Calu3 (cell line): ENCODE measurements at regions of chr6 and their contacts with region 1.

Region 1: GRCh38 chr6:160137989-160138835 is 16.6 kb downstream of the SLC22A1 start:
- DNase-seq: peak; percentile 64
- H3K4me3 Mint-ChIP-seq: no peak overlapping the region
- H3K27ac Mint-ChIP-seq: no peak overlapping the region
- H3K4me1 Mint-ChIP-seq: peaks cover 24% of the 10 kb centered on the region
- H3K27me3 Mint-ChIP-seq: no peaks in the 10 kb centered on the region
- CTCF ChIP-seq: peak; percentile 63

Region 2: GRCh38 chr6:159941286-159942113 is 196.7 kb before region 1 on chr6:
- CTCF ChIA-PET with region 1: no interaction called
- intact Hi-C with region 1: no loop called
- DNase-seq: peak; percentile 24
- H3K4me3 Mint-ChIP-seq: no peak overlapping the region
- H3K27ac Mint-ChIP-seq: no peak overlapping the region
- H3K4me1 Mint-ChIP-seq: no peaks in the 10 kb centered on the region
- H3K27me3 Mint-ChIP-seq: peaks cover 24% of the 10 kb centered on the region
- CTCF ChIP-seq: no peak

Region 3: DNA sequence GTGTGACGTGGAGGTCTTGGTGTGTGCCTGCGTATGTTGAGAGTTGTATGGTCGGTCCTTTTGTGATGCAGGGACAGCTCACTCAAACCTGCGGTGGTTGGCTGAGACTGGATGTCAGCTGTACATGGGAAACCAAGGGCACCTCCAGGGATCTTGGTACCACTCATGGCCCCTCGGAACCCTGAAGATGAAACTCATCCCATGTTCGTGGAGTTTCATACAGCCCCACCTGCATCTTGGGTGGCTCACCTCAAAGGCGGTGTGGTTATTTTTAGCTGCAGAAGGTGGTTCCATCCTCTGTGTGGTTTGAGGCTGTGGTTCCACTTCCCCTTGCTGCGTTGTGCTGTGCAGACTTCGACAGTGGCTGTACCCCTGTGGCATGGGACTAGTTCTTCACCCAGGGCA is 69.2 kb before region 1 on chr6:
- CTCF ChIA-PET with region 1: no interaction called
- intact Hi-C with region 1: no loop called
- DNase-seq: no peak
- H3K4me3 Mint-ChIP-seq: no peak overlapping the region
- H3K27ac Mint-ChIP-seq: no peak overlapping the region
- H3K4me1 Mint-ChIP-seq: no peaks in the 10 kb centered on the region
- H3K27me3 Mint-ChIP-seq: no peaks in the 10 kb centered on the region
- CTCF ChIP-seq: no peak

Region 4: DNA sequence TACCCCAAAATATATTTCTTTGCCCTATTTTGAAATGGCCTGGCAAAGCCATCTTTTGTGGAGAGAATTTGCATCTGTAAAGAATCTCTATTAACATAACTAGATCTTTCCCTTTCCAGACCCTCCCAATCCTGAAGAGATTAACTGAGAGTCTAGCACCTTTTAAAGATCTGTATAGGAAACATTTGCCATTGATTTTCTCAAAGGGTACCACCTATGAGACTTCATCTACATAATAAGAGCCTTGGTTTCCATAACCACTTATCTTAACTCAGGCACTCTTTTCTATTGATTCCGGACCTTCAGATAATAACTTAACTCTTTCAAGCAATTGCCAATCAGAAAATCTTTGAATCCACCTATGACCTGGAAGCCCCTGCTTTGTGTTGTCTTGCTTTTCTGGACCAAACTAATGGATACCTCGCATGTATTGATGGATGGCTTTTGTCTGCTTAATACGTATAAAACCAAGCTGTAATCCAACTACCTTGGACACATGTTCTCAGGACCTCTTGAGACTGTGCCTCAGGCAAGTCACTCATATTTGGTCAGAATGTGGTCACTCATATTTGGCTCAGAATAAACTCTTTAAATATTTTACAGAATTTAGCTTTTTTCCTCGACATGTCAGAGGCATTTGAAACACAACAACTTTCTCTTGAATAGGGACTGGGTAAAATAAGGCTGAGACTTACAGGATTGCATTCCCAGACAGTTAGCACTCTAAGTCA is 89.0 kb after region 1 on chr6:
- CTCF ChIA-PET with region 1: no interaction called
- intact Hi-C with region 1: no loop called
- DNase-seq: no peak
- H3K4me3 Mint-ChIP-seq: no peak overlapping the region
- H3K27ac Mint-ChIP-seq: no peak overlapping the region
- H3K4me1 Mint-ChIP-seq: no peaks in the 10 kb centered on the region
- H3K27me3 Mint-ChIP-seq: no peaks in the 10 kb centered on the region
- CTCF ChIP-seq: no peak

Region 5: GRCh38 chr6:160297310-160297709 is 159.1 kb after region 1 on chr6:
- CTCF ChIA-PET with region 1: interaction called, 13 read pairs
- intact Hi-C with region 1: loop called (anchors 1 kb)
- DNase-seq: peak; percentile 59
- H3K4me3 Mint-ChIP-seq: no peak overlapping the region
- H3K27ac Mint-ChIP-seq: no peak overlapping the region
- H3K4me1 Mint-ChIP-seq: peaks cover 44% of the 10 kb centered on the region
- H3K27me3 Mint-ChIP-seq: no peaks in the 10 kb centered on the region
- CTCF ChIP-seq: peak; percentile 51

Region 6: DNA sequence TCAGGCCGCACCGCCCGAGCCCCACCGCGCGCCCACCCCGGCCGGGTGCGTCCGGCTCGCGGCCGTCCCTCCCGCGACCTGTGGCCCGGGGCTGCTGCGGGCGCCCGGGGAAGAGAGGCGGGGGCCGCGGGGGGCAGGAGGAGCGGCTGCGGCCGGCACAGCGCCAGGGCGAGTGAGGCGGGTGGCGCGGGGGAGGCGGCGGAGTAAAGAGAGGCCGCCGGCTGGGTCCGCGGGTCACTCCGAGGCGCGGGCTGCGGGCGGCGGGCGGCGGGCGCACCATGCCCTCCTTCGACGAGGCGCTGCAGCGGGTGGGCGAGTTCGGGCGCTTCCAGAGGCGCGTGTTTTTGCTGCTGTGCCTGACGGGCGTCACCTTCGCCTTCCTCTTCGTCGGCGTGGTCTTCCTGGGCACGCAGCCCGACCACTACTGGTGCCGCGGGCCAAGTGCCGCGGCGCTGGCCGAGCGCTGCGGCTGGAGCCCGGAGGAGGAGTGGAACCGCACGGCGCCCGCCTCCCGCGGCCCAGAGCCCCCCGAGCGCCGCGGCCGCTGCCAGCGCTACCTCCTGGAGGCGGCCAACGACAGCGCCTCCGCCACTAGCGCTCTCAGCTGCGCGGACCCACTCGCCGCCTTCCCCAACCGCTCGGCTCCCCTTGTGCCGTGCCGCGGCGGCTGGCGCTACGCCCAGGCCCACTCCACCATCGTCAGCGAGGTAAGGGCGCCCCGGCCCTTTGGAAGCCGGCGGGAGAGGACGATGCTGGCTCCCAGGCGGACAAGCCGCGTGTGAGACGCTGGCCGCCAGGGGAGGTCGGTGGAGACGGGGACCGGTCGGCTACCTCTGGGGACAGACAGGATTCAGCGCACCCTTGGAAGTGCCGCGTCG is 210.2 kb after region 1 on chr6 and contains the start of gene SLC22A3:
- CTCF ChIA-PET with region 1: no interaction called
- intact Hi-C with region 1: loop called (anchors 2 kb)
- DNase-seq: peak; percentile 58
- H3K4me3 Mint-ChIP-seq: peak within 1 kb of the TSS; percentile 83
- H3K27ac Mint-ChIP-seq: peak within 1 kb of the TSS; percentile 73
- H3K4me1 Mint-ChIP-seq: peaks cover 16% of the 10 kb centered on the region
- H3K27me3 Mint-ChIP-seq: no peaks in the 10 kb centered on the region
- CTCF ChIP-seq: no peak
- total RNA-seq, gene SLC22A3: 3.3 and 8.1 TPM in 2 replicates

Region 7: DNA sequence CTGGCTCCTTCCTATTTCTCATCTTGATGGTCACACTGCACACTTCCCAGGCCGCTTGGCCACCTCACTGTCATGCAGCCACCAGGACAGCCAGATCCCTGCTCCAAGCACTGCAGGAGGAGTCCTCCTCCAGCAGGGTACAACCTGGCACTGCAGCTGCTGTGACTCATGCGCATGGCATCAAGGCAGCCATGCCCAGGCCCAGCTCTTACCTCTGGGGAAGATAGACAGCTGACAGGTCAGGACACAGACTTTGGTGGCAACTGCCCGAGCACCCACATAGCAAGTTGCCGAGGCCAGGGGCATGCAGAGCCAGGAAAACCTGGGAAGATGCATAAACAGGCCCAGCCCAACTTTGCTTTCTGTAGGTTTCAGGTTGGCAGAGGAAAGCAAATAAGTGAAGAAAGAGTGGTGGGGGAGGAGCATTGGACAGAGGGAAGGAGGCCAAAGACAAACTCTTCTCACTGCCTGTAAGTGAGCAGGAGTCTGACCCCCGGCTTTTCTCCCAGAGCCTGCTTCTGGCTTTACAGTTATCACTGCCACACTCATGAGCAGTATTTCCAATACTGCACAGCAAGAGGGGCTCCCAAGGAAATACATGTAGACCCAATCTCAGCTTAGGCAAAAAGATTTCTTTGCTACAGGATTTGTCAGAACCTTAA is 248.8 kb after region 1 on chr6:
- CTCF ChIA-PET with region 1: interaction called, 3 read pairs
- intact Hi-C with region 1: loop called (anchors 5 kb)
- DNase-seq: peak; percentile 77
- H3K4me3 Mint-ChIP-seq: peak overlapping the region; percentile 2
- H3K27ac Mint-ChIP-seq: no peak overlapping the region
- H3K4me1 Mint-ChIP-seq: peaks cover 55% of the 10 kb centered on the region
- H3K27me3 Mint-ChIP-seq: no peaks in the 10 kb centered on the region
- CTCF ChIP-seq: peak; percentile 52

Region 8: DNA sequence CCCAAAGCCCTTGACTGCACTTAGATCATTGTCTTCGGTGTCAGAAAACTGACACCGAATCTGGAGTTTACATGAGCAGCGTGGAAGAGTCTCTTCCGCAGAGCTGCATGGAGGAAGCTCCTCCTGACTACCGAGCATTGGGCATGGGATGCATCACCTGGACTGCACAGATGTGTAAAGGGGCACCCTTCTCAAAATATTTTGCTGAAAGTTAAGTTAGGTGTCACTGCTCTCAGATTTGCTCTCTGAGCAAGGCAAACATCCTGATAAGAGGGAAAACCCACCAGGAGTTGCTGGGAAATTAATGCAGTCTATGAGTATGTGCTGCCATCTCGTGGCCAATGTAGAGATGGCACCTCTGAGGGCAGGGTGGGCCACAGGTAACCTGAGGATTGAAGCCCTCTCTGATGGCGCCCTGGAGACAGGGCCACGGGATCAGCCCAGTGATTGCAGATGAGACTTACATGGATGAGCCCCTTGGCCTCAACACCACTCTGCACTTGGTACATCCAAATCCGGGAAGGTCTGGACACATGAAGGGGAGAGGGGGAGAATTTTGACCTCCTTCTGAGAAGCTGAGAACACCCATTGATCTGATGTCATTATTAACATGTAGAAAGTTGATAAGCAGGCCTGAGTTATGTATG is 396.0 kb after region 1 on chr6:
- CTCF ChIA-PET with region 1: interaction called, 7 read pairs
- intact Hi-C with region 1: loop called (anchors 1 kb)
- DNase-seq: peak; percentile 64
- H3K4me3 Mint-ChIP-seq: no peak overlapping the region
- H3K27ac Mint-ChIP-seq: no peak overlapping the region
- H3K4me1 Mint-ChIP-seq: no peaks in the 10 kb centered on the region
- H3K27me3 Mint-ChIP-seq: no peaks in the 10 kb centered on the region
- CTCF ChIP-seq: peak; percentile 94

Region 9: DNA sequence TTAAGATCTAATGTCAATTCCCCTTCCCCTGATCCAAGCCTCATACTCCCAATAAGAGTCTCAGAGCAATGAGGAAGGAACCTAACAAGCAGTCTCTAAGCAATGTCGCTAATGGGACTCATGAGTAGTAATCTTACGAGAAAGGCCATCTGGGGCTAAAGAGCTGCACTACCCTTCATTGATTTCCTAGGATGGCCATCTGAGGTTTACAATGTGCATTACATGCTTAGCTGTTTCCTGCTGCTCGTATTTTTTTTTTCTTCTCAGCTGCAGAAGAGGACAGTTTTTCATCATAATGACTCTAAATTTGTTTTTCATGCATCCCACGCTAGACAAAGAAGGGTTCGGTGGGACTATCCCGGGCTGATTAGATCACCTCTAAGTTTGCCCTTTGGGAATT is 406.6 kb after region 1 on chr6:
- CTCF ChIA-PET with region 1: no interaction called
- intact Hi-C with region 1: no loop called
- DNase-seq: no peak
- H3K4me3 Mint-ChIP-seq: no peak overlapping the region
- H3K27ac Mint-ChIP-seq: no peak overlapping the region
- H3K4me1 Mint-ChIP-seq: no peaks in the 10 kb centered on the region
- H3K27me3 Mint-ChIP-seq: peaks cover 75% of the 10 kb centered on the region
- CTCF ChIP-seq: no peak